ENCODE measurements at regions of chr12 and their contacts with region 1.

Region 1: DNA sequence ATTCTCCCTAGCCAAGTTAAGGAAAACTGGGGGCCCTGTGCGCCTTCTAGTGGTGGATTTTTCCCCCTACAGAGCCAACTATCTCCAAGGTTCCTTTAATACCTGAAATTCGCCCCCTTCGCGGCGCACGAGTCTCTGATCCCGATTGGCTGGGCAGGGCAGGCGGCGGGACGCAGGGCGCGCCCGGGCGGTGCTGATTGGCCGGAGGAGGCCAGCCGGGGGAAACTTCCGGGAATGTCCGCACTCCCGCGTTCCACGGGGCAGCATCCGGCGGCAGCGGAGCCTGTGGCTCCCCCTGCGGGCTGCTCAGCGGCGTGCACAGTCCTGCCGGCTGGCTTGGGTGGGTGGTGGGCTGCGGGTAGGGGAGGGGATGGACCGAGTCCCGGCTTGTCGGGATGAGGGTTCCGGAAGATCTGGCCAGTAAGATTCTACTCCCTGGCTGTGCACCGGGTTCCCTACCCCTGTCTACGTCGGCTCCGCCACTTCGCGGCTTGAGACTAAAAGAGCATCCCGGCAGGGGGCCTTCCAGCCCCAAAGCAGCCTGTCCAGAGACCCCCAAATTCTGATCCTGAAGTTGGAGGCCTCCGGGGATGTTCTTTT is at the start of gene NABP2:
- DNase-seq: peak; percentile 98
- ATAC-seq: peak; percentile 83
- H3K4me3 Mint-ChIP-seq: peak within 1 kb of the TSS; percentile 98
- H3K27ac Mint-ChIP-seq: peak within 1 kb of the TSS; percentile 88
- H3K4me1 Mint-ChIP-seq: peaks cover 37% of the 10 kb centered on the region
- H3K27me3 Mint-ChIP-seq: no peaks in the 10 kb centered on the region
- total RNA-seq, gene NABP2: 69.1 to 76.0 TPM

Region 2: DNA sequence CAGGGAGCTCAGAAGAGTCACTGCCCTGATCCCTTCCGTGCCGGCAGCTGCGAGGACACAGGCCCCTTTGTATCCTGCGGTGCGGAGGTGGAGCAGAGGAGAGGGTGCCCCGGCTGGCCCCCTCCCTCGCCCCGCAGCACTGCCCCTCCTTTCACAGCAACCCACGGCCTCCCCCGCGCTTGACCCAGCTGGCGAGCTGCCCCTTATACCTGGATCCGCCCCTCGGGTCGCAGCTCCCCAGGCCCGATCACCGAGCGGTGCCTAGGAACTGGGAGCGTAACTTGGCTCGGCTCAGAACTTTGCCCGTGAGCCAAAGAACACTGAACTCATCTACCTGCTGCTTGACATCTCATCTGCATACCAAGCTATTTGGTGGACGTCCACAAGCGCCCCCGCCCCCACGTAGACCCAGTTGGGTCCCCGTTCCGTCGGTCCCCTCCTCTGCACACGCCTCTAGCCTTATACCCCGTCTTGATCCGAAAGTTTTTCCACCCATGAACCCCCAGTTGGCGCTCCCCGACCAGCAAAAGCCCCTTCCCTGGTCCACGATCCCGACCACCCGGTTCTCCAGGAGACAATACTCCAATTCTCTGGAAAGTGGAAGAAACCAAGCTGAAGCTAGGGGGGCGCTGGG is 394.1 kb before region 1 on chr12:
- CTCF ChIA-PET with region 1: no interaction called
- POLR2A ChIA-PET with region 1: no interaction called
- intact Hi-C with region 1: loop called in 1 of 2 experiments (anchors 1 kb)
- DNase-seq: peak; percentile 52
- ATAC-seq: peak; percentile 37
- H3K4me3 Mint-ChIP-seq: peak overlapping the region; percentile 99
- H3K27ac Mint-ChIP-seq: peak overlapping the region; percentile 97
- H3K4me1 Mint-ChIP-seq: peaks cover 46% of the 10 kb centered on the region
- H3K27me3 Mint-ChIP-seq: no peaks in the 10 kb centered on the region

Region 3: GRCh38 chr12:56104109-56104814 is 119.9 kb before region 1 on chr12 and contains the start of gene PA2G4:
- CTCF ChIA-PET with region 1: interaction called, 10 read pairs
- POLR2A ChIA-PET with region 1: no interaction called
- intact Hi-C with region 1: loop called in 1 of 2 experiments (anchors 1 kb)
- DNase-seq: peak; percentile 99
- ATAC-seq: peak; percentile 95
- H3K4me3 Mint-ChIP-seq: peak within 1 kb of the TSS; percentile 100
- H3K27ac Mint-ChIP-seq: peak within 1 kb of the TSS; percentile 100
- H3K4me1 Mint-ChIP-seq: peaks cover 43% of the 10 kb centered on the region
- H3K27me3 Mint-ChIP-seq: no peaks in the 10 kb centered on the region
- total RNA-seq, gene PA2G4: 446 to 695 TPM

Region 4: DNA sequence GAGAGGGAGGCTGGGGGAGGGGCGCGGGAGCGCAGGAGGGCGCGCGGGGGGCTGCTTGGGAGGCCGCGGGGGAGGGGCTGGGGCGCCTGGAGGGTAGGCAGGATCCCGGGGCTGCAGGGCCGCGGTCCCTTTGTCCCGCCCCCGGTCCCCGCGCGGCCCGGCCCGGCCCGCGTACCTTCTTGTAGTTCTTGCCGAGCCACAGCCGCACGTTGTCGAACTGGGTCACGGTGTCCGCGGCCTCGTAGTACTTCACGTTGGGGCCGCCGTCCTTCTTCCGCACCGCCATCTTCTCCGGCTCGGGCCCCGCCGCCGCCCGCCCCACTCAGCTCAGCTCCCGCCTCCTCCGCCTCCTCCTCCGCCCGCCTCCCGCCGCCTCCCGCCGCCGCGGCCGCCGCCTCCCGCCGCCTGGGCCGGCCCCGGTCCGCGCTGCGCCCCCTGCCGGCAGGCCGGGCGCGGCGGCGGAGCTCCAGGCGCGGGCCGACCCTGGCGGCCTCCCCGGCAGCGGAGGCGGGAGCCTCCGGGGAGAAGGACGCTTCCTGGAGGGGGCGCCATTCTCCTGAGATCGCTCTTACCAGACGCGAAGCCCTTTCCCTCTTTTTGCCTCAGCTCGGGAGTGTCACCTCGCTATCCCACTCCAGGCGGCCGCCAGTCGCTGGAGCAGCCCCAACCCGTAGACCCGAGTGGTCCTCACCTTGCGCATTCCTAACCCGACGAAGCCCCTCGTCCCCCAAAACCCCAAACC is 34.9 kb before region 1 on chr12 and contains the start of gene SMARCC2:
- CTCF ChIA-PET with region 1: interaction called, 31 read pairs
- POLR2A ChIA-PET with region 1: interaction called, 12 read pairs
- intact Hi-C with region 1: loop called (anchors 1 kb)
- DNase-seq: peak; percentile 94
- ATAC-seq: peak; percentile 82
- H3K4me3 Mint-ChIP-seq: peak within 1 kb of the TSS; percentile 82
- H3K27ac Mint-ChIP-seq: peak within 1 kb of the TSS; percentile 96
- H3K4me1 Mint-ChIP-seq: peaks cover 38% of the 10 kb centered on the region
- H3K27me3 Mint-ChIP-seq: no peaks in the 10 kb centered on the region
- total RNA-seq, gene SMARCC2: 96.9 to 123 TPM

Region 5: DNA sequence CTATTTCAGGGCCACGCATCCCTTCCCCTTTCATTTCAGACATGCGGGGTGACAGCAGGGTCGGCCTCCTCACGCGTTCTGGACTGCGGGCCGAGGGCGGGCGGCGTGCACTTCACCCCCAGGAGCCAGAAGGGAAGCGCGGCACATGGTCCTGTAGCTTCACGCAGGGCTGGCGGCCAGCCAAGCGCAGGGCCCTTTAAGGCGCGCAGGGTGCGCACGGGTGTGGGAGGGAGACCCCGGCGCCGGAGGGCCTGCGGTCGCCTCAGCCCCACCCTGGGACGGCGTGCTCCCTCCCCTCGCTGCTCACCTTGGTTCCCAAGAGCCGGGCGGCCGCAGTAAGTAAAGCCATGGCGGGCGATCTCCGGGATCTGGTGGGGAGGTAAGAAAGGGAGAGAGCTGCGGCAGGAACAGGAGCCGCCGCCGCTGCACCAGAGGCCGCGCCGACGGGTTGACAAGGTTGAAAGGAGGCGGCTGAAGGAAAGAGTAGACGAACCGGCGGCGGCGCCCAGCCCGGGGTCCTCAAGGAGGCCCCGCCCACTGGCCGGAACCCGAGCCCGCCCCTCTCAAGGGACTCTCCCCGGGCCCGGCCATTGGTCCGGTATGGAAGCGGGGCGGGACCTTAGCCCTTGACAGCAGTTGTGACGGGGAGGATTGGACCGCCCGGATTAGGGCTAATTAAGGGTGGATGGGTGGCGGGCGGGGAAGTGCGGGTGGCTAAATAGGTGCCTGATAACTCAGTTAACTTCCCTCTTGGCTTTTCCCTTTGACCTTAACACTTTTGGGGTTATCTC is 75.8 kb after region 1 on chr12 and contains the start of gene CS:
- CTCF ChIA-PET with region 1: interaction called, 3 read pairs
- POLR2A ChIA-PET with region 1: no interaction called
- intact Hi-C with region 1: loop called in 1 of 2 experiments (anchors 1 kb)
- DNase-seq: peak; percentile 99
- ATAC-seq: peak; percentile 98
- H3K4me3 Mint-ChIP-seq: peak within 1 kb of the TSS; percentile 96
- H3K27ac Mint-ChIP-seq: peak within 1 kb of the TSS; percentile 91
- H3K4me1 Mint-ChIP-seq: peaks cover 49% of the 10 kb centered on the region
- H3K27me3 Mint-ChIP-seq: no peaks in the 10 kb centered on the region
- total RNA-seq, gene CS: 197 to 293 TPM

Region 6: GRCh38 chr12:56468216-56469006 is 244.2 kb after region 1 on chr12 and contains the start of gene SPRYD4:
- CTCF ChIA-PET with region 1: interaction called, 9 read pairs
- POLR2A ChIA-PET with region 1: no interaction called
- intact Hi-C with region 1: loop called in 1 of 2 experiments (anchors 1 kb)
- DNase-seq: peak; percentile 96
- ATAC-seq: peak; percentile 90
- H3K4me3 Mint-ChIP-seq: peak within 1 kb of the TSS; percentile 91
- H3K27ac Mint-ChIP-seq: peak within 1 kb of the TSS; percentile 99
- H3K4me1 Mint-ChIP-seq: peaks cover 40% of the 10 kb centered on the region
- H3K27me3 Mint-ChIP-seq: no peaks in the 10 kb centered on the region
- total RNA-seq, gene SPRYD4: 3.1 TPM

Region 7: DNA sequence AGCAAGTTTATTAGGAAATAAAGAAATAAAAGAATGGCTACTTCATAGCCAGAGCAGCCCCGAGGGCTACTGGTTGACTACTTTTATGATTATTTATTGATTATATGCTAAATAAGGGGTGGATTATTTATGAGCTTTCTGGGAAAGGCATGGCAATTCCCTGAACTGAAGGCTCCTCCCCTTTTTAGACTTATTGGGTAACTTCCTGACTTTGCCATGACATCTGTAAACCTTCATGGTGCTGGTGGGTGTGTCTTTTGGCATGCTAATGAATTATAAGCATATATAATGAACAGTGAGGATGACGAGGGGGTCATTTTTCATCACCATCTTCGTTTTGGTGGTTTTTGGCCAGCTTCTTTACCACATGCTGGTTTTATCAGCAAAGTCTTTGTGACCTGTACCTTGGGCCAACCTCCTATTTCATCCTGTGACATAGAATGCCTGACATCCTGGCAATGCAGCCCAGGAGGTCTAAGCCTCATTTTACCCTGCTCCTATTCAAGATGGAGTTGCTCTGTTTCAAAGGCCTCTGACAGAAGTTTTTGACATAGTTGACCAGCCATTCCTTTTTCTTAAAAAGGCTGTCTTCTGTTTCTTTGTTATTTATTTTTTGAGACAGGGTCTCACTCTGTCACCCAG is 474.9 kb after region 1 on chr12:
- CTCF ChIA-PET with region 1: no interaction called
- POLR2A ChIA-PET with region 1: no interaction called
- intact Hi-C with region 1: no loop called
- DNase-seq: no peak
- ATAC-seq: no peak
- H3K4me3 Mint-ChIP-seq: no peak overlapping the region
- H3K27ac Mint-ChIP-seq: no peak overlapping the region
- H3K4me1 Mint-ChIP-seq: peaks cover 5% of the 10 kb centered on the region
- H3K27me3 Mint-ChIP-seq: peaks cover 2% of the 10 kb centered on the region